Calu3 (cell line): ENCODE measurements at regions of chr7 and their contacts with region 1.

Region 1: GRCh38 chr7:1175967-1176851 is 16.2 kb upstream of the ZFAND2A start:
- DNase-seq: peak; percentile 98
- H3K4me3 Mint-ChIP-seq: peak overlapping the region; percentile 59
- H3K27ac Mint-ChIP-seq: peak overlapping the region; percentile 40
- H3K4me1 Mint-ChIP-seq: peaks cover 15% of the 10 kb centered on the region
- H3K27me3 Mint-ChIP-seq: peaks cover 48% of the 10 kb centered on the region
- CTCF ChIP-seq: peak; percentile 99

Region 2: DNA sequence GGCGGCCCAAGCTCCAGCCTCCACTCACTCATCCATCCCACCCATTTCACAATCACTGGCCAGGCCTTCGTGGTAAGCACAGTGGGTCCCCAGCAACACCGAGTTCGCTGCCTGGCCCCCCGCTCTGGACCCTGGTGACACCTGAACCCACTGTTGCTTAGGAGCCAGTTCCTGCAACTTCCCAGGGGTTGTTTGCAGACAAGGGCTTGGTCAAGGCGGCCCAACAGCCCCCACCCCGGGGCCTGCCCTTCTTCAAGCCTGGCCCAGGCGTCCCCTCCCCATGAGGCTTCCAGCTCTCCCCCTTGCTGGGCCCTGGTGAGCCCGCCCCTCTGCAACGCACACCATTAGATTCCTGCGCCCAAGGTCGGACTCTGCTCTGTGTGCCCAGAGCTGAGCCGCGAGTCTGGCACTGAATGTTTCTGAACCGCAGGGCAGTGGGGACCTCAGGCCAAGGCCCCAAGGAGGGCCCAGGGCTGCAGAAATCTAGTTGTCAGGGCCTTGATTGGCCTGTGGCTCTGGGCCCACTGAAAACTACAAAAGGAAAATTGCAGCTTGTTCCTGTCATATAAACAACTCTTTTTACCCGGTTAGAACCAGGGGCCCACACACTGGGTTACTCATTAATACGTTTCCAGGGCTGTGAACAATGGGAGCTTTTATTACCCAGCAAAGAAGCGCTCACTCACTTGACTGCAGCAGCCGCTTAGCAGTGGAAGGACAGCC is 198.7 kb before region 1 on chr7:
- CTCF ChIA-PET with region 1: interaction called, 16 read pairs
- intact Hi-C with region 1: no loop called
- DNase-seq: peak; percentile 91
- H3K4me3 Mint-ChIP-seq: peak overlapping the region; percentile 93
- H3K27ac Mint-ChIP-seq: peak overlapping the region; percentile 80
- H3K4me1 Mint-ChIP-seq: peaks cover 29% of the 10 kb centered on the region
- H3K27me3 Mint-ChIP-seq: no peaks in the 10 kb centered on the region
- CTCF ChIP-seq: no peak

Region 3: DNA sequence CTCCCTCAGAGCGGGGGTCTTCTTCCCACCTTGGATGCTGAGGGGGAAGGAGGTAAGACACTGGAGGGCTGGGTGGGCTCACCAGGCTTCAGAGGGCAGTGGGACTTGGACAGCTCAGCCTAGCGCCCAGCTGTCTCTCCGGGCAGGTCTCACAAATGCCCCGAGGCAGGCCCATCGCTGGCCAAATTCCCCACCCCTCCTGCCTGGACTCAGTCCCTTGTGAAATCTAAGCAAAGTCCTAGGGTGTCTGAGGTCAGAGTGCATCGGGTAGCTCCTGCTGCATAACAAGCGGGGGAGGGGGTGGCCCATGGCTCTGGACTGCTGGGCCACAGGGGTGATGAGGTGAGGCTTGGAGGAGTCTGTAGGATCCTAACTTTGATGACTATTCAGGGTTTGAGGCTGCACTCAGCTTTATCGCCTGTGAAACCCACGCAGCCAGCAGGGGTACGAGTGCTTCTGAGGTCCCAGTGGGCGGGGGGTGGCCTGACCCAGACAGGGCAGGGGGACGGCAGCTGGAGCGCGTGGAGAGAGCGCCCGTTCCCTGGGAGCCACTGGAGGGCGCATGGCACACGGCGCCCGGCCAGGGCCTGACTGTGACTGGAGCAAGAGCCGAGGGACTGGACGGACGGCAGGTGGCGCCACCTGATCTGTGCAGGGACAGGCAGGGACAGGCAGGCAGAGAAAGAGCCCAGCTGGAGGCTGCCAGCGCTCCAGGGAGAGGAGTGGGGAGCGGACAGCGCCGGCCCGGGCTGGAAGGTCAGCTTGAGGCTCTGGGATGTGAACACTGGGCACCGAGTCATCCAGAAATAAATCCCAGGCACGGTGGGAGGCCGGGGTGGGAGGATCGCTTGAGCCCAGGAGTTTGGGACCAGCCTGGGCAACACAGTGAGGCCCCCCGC is 183.3 kb before region 1 on chr7:
- CTCF ChIA-PET with region 1: interaction called, 18 read pairs
- intact Hi-C with region 1: loop called (anchors 2 kb)
- DNase-seq: peak; percentile 99
- H3K4me3 Mint-ChIP-seq: peak overlapping the region; percentile 36
- H3K27ac Mint-ChIP-seq: peak overlapping the region; percentile 87
- H3K4me1 Mint-ChIP-seq: peaks cover 13% of the 10 kb centered on the region
- H3K27me3 Mint-ChIP-seq: no peaks in the 10 kb centered on the region
- CTCF ChIP-seq: peak; percentile 100

Region 4: GRCh38 chr7:1065263-1066260 is 110.6 kb before region 1 on chr7:
- CTCF ChIA-PET with region 1: interaction called, 12 read pairs
- intact Hi-C with region 1: no loop called
- DNase-seq: peak; percentile 96
- H3K4me3 Mint-ChIP-seq: no peak overlapping the region
- H3K27ac Mint-ChIP-seq: no peak overlapping the region
- H3K4me1 Mint-ChIP-seq: peaks cover 10% of the 10 kb centered on the region
- H3K27me3 Mint-ChIP-seq: no peaks in the 10 kb centered on the region
- CTCF ChIP-seq: peak; percentile 98

Region 5: GRCh38 chr7:1090686-1091643 is 85.2 kb before region 1 on chr7:
- CTCF ChIA-PET with region 1: interaction called, 4 read pairs
- intact Hi-C with region 1: loop called (anchors 2 kb)
- DNase-seq: no peak
- H3K4me3 Mint-ChIP-seq: no peak overlapping the region
- H3K27ac Mint-ChIP-seq: no peak overlapping the region
- H3K4me1 Mint-ChIP-seq: peaks cover 17% of the 10 kb centered on the region
- H3K27me3 Mint-ChIP-seq: no peaks in the 10 kb centered on the region
- CTCF ChIP-seq: no peak

Region 6: GRCh38 chr7:1137510-1138167 is 38.6 kb before region 1 on chr7:
- CTCF ChIA-PET with region 1: interaction called, 27 read pairs
- intact Hi-C with region 1: no loop called
- DNase-seq: no peak
- H3K4me3 Mint-ChIP-seq: peak overlapping the region; percentile 70
- H3K27ac Mint-ChIP-seq: peak overlapping the region; percentile 4
- H3K4me1 Mint-ChIP-seq: peaks cover 13% of the 10 kb centered on the region
- H3K27me3 Mint-ChIP-seq: no peaks in the 10 kb centered on the region
- CTCF ChIP-seq: no peak

Region 7: DNA sequence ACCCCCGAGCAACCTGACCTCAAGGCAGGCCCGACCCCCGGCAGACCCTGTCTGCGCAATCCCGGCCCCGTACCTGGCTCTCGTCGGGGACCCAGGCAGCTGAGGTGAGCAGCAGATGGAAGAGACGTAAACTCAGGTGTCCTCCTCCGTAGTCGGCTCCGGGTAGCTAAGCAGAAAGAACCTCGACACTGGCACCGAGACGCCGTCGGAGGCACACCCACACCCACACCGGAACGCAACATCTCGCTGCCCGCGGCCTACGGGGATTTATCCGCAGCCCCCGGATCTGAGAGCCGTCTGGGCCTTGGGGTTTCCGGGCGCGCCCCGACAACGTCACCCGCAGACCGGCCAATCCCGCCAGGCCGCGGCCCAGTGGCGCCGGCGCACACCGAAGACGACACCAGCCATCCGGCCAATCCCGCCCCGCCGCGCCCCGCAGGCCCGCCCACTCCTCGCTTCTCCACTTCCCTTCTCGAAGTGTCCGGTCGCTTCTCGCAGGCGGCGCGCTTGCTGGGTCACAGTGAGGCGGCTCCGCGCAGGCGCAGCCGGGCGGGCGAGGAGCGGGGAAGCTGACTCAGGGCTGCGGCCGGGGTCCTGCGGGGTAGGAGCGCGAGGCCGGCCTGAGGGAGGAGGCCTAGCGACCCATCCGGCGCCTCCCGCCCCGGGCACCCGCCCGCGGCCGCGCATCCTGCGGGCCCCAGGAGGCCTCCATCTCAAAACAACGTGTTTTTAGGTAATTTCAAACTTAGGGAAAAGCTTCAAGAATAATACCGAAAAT is 16.1 kb before region 1 on chr7 and contains the start of gene ZFAND2A:
- CTCF ChIA-PET with region 1: interaction called, 19 read pairs
- intact Hi-C with region 1: no loop called
- DNase-seq: peak; percentile 100
- H3K4me3 Mint-ChIP-seq: peak within 1 kb of the TSS; percentile 97
- H3K27ac Mint-ChIP-seq: peak within 1 kb of the TSS; percentile 91
- H3K4me1 Mint-ChIP-seq: peaks cover 39% of the 10 kb centered on the region
- H3K27me3 Mint-ChIP-seq: no peaks in the 10 kb centered on the region
- CTCF ChIP-seq: no peak
- total RNA-seq, gene ZFAND2A: 51.2 and 56.6 TPM in 2 replicates